ENCODE measurements at regions of chr2 and their contacts with region 1.

Region 1: DNA sequence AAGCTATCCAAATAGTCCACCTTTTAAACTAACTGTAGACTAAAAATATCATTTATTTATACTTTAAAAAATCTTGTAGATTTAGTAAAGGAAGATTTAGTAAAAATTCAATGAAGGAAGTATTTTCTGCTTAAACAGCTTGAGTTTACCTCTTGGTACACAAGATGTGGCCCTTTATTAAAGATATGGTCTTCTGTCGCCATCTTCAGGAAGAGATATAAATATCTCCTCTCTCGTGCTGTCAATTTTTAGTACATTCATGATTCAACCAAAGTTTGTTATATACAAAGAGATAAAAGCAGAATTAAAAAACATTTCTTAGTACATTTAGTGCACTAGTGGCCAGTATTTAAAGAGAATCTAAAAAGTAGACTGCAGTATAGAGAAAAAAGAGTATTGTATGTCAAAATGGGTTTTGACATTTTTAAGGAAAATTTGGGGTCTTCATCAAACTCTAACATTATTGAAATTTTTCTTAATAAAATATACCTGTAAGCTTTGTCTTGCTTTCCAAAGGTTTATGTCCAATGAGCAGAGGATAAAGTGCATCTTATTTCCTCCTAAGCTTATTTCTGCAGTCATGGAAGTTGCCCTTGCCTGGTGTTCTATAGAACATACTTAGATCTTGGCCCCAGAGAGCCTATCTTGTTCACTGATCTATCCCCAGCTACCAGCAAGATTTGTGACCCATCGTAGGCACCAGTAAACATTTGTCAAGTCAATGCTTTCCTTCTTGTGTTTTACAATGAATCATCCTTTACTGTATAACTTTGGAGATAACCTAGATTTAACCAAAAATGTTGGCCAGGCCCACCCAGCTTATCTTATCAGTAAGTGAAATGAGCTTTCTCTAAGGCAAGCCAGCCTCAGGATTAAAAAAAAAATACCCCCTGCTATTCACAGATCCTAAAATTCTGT is 18.5 kb upstream of the EML6 start:
- DNase-seq: peak; percentile 68
- H3K4me3 Mint-ChIP-seq: no peak overlapping the region
- H3K27ac Mint-ChIP-seq: no peak overlapping the region
- H3K4me1 Mint-ChIP-seq: no peaks in the 10 kb centered on the region
- H3K27me3 Mint-ChIP-seq: peaks cover 61% of the 10 kb centered on the region

Region 2: GRCh38 chr2:54106631-54107454 is 598.1 kb before region 1 on chr2:
- intact Hi-C with region 1: loop called (anchors 5 kb)
- DNase-seq: peak; percentile 84
- H3K4me3 Mint-ChIP-seq: no peak overlapping the region
- H3K27ac Mint-ChIP-seq: no peak overlapping the region
- H3K4me1 Mint-ChIP-seq: peaks cover 8% of the 10 kb centered on the region
- H3K27me3 Mint-ChIP-seq: peaks cover 11% of the 10 kb centered on the region

Region 3: DNA sequence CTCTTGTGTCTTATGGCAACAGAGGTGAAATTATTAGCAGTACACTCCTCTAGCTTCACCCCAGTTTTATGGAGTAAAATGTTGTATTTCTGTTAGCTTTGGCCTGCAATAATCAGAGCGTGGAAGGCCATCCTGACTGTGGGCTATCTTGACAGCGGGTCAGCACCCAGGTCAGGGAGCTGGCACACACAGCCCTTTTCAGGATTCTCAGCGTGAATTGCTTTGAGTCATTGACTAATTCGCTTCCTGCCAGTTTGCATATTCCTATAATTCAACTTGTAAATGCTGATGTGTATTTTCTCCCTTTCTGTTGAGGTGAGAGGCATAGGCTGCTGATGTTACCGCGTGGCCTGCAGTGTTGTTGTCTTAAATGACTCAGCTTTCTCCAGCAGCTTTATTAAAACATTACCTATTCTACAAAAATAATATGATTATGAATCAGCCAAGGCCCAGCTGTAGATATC is 91.1 kb before region 1 on chr2:
- intact Hi-C with region 1: no loop called
- DNase-seq: no peak
- H3K4me3 Mint-ChIP-seq: no peak overlapping the region
- H3K27ac Mint-ChIP-seq: no peak overlapping the region
- H3K4me1 Mint-ChIP-seq: peaks cover 39% of the 10 kb centered on the region
- H3K27me3 Mint-ChIP-seq: no peaks in the 10 kb centered on the region

Region 4: GRCh38 chr2:54657664-54658083 is 47.3 kb before region 1 on chr2:
- intact Hi-C with region 1: loop called (anchors 1 kb)
- DNase-seq: peak; percentile 78
- H3K4me3 Mint-ChIP-seq: no peak overlapping the region
- H3K27ac Mint-ChIP-seq: peak overlapping the region; percentile 76
- H3K4me1 Mint-ChIP-seq: peaks cover 19% of the 10 kb centered on the region
- H3K27me3 Mint-ChIP-seq: no peaks in the 10 kb centered on the region

Region 5: GRCh38 chr2:54665436-54665856 is 39.5 kb before region 1 on chr2:
- intact Hi-C with region 1: loop called (anchors 1 kb)
- DNase-seq: peak; percentile 86
- H3K4me3 Mint-ChIP-seq: no peak overlapping the region
- H3K27ac Mint-ChIP-seq: no peak overlapping the region
- H3K4me1 Mint-ChIP-seq: peaks cover 15% of the 10 kb centered on the region
- H3K27me3 Mint-ChIP-seq: no peaks in the 10 kb centered on the region

Region 6: GRCh38 chr2:55282110-55282917 is 577.4 kb after region 1 on chr2:
- intact Hi-C with region 1: no loop called
- DNase-seq: peak; percentile 97
- H3K4me3 Mint-ChIP-seq: peak overlapping the region; percentile 92
- H3K27ac Mint-ChIP-seq: peak overlapping the region; percentile 94
- H3K4me1 Mint-ChIP-seq: peaks cover 9% of the 10 kb centered on the region
- H3K27me3 Mint-ChIP-seq: no peaks in the 10 kb centered on the region

Region 7: DNA sequence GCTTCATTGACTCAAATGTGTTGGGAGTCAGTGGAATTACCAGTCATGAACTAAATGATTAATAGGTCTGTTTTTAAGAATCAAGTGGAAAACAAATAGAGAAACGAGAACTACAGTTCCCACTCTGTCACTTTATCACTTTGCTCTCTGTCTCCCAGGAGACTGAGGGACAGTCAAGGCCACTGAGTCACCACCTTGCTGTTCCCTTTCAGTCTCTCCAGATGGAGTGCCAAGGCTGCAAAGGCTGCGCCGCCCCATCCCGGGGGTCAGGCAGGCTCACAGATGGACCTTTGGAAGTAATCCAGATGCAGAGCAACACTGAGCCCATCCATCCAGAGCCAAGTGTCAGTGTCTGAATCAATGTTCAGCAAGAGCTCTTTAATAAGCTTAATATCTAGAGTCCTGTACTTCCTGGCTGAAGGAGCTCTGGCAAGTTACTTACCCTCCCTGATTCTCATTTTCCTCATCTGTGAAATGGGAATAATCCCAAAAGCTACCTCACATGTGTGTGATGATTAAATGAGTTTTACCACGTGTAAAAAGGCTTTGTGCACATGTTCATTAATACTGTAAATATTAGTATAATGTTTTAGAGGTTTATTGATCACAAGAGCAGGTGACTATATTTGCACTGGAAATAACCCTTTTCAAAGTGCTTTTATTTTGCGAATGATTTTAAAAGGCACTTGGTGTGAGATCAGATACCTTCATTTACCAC is 1261.6 kb after region 1 on chr2:
- intact Hi-C with region 1: no loop called
- DNase-seq: no peak
- H3K4me3 Mint-ChIP-seq: no peak overlapping the region
- H3K27ac Mint-ChIP-seq: no peak overlapping the region
- H3K4me1 Mint-ChIP-seq: no peaks in the 10 kb centered on the region
- H3K27me3 Mint-ChIP-seq: no peaks in the 10 kb centered on the region

Measured in activated CD4-positive, alpha-beta T cell treated with anti-CD3 and anti-CD28 coated beads, Interleukin-2, amount 10 ng/mL, durations not matched to agents 24 days and 14 days (primary cell).